Motor neuron (in vitro differentiated cells): ENCODE measurements at regions of chr13 and their contacts with region 1.

Region 1: DNA sequence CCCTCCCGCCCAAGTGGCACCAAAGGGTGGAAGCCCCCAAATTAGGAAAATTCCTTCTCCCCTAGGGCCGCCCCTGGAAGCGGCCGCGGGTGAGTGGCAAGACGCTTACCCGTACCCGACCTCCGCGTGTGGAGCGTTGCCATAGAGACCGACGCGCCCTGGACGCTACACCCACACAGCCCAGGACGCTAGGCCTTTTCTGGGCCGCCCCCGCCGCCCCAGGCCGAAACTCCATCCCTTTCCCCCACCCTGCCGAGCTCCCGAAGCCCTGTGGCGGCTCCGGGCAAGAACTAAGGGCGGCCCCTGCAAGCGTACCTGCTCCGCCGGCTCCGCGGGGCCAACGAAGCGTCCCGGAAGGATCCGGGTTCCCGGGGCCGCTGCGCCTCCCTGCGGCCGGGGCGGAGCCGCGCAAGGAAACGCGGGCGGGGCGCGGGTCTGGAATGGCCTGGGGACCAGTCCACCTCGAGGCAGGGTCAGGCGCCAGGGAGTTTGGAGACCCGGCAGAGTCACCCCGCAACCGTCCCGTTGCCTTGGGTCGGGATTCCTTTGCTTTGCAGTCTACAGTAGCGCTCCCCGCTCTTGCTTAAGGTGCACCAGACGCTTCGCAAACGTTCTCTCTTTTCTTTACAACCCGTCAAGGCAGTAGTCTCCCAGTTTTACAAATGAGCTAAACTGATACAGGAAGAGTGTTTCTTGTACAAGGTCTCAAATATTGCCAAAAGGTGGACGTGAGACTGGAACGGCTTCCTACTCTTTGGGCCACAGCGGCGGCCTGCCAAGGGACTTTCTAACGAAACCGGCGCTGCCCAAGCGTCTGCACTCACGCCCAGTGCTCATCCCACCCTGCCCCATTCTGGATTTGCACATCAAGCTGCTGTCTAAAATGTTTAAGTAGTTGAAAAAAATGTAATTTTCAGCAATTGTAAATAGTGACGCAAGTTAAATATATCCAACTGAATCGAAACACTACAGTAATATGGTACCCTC is at the start of gene NEK5:
- ATAC-seq: peak; percentile 81 to 92 (median 90)
- H3K4me3 ChIP-seq: peak within 1 kb of the TSS; percentile 54 to 89 (median 69)
- H3K27ac ChIP-seq: no peak within 1 kb of the TSS
- H3K4me1 ChIP-seq: peaks cover 0 to 4% of the 10 kb centered on the region in 2 donors
- total RNA-seq, gene NEK5: 0.99 to 8.2 (median 1.4) TPM

Region 2: DNA sequence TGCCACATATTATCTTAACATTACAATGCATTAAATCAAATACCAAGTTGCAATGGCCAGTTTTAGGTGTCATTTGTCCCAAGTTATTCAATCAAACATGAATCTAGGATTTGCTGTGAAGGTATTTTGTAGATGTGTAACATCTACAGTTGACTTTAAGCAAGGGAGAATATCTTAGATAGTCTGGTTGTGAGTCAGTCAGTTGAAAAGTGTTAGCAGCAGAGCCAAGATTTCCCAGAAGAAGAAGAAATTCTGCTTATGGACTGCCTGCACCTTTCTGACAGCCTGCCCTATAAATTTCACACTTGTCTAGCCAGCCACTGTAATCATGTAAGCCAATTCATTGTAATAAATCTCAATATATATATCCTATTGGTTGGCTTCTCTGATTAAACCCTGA is 634.9 kb before region 1 on chr13:
- in situ Hi-C with region 1: no loop called
- ATAC-seq: no peak
- H3K4me3 ChIP-seq: no peak overlapping the region
- H3K27ac ChIP-seq: no peak overlapping the region
- H3K4me1 ChIP-seq: no peaks in the 10 kb centered on the region

Region 3: DNA sequence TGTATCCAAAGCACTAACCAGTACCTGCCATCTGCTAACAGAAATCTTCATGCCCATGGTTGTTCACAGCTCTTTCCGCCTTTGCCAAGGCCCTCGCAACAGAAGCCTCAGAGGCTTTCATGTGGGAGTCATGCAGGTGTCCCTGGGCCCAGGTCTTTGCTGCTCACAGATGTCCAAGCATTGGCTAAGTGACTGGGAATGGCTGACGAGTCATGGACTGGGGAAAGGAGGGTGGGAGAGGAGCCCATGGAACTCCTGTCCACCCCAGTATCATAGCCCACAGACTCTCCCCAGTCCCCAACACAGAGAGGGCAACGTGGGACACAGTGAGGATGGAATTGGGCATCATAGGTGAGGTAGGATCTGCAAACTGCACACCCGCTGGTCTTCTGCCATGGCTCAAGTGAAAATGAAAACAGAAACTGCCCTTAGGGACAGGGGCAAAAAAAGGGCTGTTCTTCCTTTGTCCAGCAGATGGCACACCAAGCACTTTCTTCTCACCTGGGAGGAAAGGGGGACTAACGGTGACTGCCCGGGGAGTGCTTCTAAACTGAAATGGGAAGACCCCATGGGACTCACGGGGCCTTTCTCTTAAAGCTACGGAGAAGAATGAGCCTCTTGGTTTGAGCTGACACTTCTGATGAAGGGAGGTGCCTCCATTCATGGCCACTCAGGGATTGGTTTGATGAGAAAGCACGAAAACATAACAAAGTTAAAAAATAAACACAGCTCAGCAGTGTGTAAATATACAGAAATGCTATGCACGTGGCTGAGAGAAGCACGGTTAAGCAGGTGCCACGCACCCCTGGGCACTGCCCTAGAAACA is 314.0 kb before region 1 on chr13:
- in situ Hi-C with region 1: loop called in 4 of 9 experiments (anchors 10 to 25 kb)
- ATAC-seq: peak; percentile 39 to 93 (median 70)
- H3K4me3 ChIP-seq: no peak overlapping the region
- H3K27ac ChIP-seq: no peak overlapping the region
- H3K4me1 ChIP-seq: peaks cover 0 to 4% of the 10 kb centered on the region in 2 donors

Region 4: DNA sequence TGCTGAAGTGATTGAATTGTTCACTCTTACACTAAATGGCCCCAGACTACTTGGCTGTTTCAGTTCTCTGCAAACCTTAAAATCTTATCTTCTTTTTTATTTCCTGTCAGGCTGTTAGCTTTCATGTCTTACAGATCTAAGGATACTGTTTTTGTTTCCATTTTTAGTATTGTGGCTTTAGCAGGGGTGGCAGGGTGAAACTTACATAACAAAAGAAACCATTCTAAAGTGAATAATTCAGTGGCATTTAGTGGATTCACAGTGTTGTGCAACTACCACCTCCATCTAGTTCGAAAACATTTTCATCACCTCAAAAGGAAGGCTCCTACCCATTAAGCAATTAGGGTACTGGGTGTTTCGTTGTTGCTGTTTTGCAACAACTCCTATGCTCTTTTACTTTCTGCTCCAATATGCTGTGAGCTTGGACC is 303.8 kb before region 1 on chr13:
- in situ Hi-C with region 1: loop called in 5 of 9 experiments (anchors 10 to 25 kb)
- ATAC-seq: no peak
- H3K4me3 ChIP-seq: no peak overlapping the region
- H3K27ac ChIP-seq: no peak overlapping the region
- H3K4me1 ChIP-seq: peaks cover 0 to 2% of the 10 kb centered on the region in 2 donors

Region 5: DNA sequence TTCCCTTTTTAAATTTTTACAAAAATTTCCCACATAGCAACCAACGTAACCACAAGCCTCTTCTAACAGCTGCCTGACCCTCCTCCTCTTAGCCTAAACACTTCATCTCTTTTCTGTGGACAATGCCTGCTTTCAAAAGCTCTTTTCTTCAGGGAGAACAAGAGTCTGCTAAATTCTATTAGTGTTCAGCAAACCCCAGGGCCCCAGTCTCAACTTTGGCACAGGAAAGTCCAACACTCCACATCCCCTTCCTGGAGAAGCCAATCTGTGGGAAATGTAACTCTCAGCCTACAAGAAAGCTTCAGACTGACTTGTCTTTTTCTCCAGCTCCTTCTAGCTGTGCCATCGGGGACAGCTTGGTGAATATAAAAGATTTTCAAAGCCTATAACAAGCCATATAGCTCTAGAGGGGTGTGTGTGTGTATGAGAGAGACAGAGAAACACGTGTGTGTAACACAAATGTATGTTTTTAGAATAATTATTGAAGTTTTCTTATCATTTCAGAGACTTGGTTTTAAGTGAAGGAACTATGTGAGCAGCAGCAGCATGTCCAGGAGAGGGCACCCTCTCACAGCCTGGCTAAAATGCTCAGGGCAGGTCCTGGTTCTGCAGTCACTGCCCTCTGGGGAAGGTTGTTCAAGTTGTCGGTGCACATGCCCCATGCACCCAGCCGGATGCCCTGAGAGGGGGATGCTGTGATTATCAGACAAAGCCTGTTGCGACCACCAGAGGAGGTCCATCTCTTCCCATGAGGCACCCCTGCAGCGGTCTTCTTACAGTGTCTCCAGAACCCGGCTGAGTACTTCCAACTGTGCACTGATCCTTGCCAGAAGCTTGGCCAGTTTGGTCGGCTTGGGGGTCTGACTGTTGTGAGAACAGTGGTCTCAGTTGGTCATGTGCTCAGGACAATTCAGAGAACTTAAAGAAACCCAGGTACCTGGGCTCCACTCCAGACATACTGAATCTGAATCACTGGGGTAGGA is 232.8 kb before region 1 on chr13:
- in situ Hi-C with region 1: loop called in 2 of 9 experiments (anchors 10 to 25 kb)
- ATAC-seq: peak; percentile 53 to 97 (median 89)
- H3K4me3 ChIP-seq: no peak overlapping the region
- H3K27ac ChIP-seq: no peak overlapping the region
- H3K4me1 ChIP-seq: peaks cover 0 to 12% of the 10 kb centered on the region in 2 donors

Region 6: DNA sequence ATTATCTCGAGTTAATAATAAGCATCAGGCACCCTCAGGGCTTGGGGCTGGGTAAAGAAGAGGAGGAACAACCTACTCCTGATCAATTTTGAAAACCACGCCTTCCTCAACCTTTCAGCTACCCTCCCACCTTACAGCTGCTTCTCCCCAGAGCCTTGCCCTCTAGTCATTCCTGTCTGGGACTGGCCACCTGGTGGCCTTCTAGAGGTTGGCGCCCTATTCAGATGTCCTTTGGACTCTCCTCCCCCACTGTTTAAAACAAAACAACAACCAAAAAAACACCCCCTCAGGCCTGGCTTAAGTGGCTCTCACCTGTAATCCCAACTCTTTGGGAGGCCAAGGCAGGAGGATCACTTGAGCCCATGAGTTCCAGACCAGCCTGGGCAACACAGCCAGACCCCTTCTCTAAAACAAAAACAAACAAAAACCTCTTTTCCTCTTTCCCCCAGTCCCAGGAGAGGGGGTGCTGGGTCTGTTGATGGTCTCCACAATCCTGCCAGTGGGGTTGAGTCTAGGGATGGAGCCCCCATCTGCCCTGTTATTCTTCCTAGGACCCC is 204.9 kb before region 1 on chr13:
- in situ Hi-C with region 1: loop called in 1 of 9 experiments (anchors 25 kb)
- ATAC-seq: peak in 3 of 8 experiments; percentile 31 to 79 (median 53)
- H3K4me3 ChIP-seq: no peak overlapping the region
- H3K27ac ChIP-seq: no peak overlapping the region
- H3K4me1 ChIP-seq: peaks cover 0 to 4% of the 10 kb centered on the region in 2 donors